AG04450 (cell line): ENCODE measurements at regions of chr7 and their contacts with region 1.

Region 1: GRCh38 chr7:23570592-23571200 is 26.5 kb upstream of the CCDC126 start:
- DNase-seq: peak; percentile 44
- H3K4me3 ChIP-seq: no peak overlapping the region
- H3K27ac ChIP-seq: no peak overlapping the region
- H3K27me3 ChIP-seq: no peaks in the 10 kb centered on the region
- CTCF ChIP-seq: peak; percentile 95

Region 2: DNA sequence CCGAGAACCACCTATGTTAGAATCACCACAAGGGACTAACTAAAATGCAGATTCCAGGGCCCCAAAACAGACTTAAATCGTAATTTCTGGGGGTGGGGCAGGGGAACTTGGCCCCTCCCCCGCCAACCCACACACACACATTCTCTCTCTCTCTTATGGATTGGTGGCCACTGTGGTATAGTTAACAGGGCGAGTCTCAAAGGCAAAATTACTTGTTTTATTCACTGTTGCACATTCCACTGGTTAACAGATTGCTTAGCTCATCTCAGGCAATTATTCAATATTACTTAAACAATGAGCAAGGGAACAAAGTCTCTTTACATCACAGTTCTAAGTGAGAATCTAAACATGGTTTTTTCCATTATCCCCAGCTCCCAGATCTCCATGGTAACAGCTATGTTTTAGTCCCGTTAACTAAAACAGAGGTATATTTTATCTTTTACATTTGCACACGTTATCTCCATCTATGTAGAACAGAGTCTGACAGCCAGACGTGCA is 138.9 kb before region 1 on chr7:
- CTCF ChIA-PET with region 1: no interaction called
- POLR2A ChIA-PET with region 1: no interaction called
- DNase-seq: no peak
- H3K4me3 ChIP-seq: no peak overlapping the region
- H3K27ac ChIP-seq: peak overlapping the region; percentile 59
- H3K27me3 ChIP-seq: no peaks in the 10 kb centered on the region
- CTCF ChIP-seq: no peak

Region 3: GRCh38 chr7:23539494-23539907 is 31.2 kb before region 1 on chr7:
- CTCF ChIA-PET with region 1: no interaction called
- POLR2A ChIA-PET with region 1: no interaction called
- DNase-seq: no peak
- H3K4me3 ChIP-seq: no peak overlapping the region
- H3K27ac ChIP-seq: no peak overlapping the region
- H3K27me3 ChIP-seq: no peaks in the 10 kb centered on the region
- CTCF ChIP-seq: no peak

Region 4: GRCh38 chr7:23712368-23713284 is 141.9 kb after region 1 on chr7:
- CTCF ChIA-PET with region 1: interaction called, 202 read pairs
- POLR2A ChIA-PET with region 1: no interaction called
- DNase-seq: peak; percentile 29
- H3K4me3 ChIP-seq: no peak overlapping the region
- H3K27ac ChIP-seq: no peak overlapping the region
- H3K27me3 ChIP-seq: no peaks in the 10 kb centered on the region
- CTCF ChIP-seq: peak; percentile 57

Region 5: DNA sequence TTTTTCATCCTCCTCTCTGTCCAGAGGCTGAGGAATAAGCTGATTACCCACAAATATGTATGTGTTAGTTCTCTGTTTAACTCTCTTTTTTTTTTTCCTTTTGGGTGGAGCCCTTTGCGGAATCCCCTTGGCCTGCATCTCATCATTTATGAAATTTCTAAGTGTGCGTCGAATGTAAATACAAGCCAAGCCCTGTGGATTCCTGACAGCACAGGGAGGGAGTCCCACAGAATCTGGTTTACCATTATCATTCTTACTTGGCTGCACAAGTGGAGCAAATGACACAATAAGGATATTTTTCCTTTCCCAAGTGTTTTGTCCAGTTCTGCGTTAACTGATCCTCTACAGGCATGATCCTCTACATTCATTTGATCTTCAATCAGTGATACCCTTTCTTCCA is 150.8 kb after region 1 on chr7:
- CTCF ChIA-PET with region 1: interaction called, 12 read pairs
- POLR2A ChIA-PET with region 1: no interaction called
- DNase-seq: no peak
- H3K4me3 ChIP-seq: no peak overlapping the region
- H3K27ac ChIP-seq: no peak overlapping the region
- H3K27me3 ChIP-seq: no peaks in the 10 kb centered on the region
- CTCF ChIP-seq: no peak

Region 6: DNA sequence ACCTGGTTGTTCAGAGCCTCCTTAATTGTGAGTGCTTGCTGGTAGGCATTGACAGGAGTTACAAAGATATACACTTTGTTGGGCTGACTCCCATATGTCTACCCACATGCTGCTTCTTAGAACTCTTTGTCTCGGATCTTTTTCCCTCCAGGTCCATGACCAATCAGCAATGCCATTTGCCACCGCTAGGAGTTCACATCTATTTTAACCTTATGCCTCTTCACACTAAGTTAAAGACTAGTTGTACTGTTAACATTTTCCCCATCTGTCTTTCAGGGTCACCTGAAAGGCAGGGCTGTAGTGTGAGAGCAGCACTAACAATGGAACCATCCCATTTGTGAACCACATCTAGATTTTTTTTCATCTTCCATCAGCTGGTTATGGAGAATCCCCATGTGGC is 486.5 kb after region 1 on chr7:
- CTCF ChIA-PET with region 1: no interaction called
- POLR2A ChIA-PET with region 1: no interaction called
- DNase-seq: no peak
- H3K4me3 ChIP-seq: no peak overlapping the region
- H3K27ac ChIP-seq: no peak overlapping the region
- H3K27me3 ChIP-seq: peaks cover 7% of the 10 kb centered on the region
- CTCF ChIP-seq: peak; percentile 23